ENCODE measurements at regions of chr18 and their contacts with region 1.

Region 1: DNA sequence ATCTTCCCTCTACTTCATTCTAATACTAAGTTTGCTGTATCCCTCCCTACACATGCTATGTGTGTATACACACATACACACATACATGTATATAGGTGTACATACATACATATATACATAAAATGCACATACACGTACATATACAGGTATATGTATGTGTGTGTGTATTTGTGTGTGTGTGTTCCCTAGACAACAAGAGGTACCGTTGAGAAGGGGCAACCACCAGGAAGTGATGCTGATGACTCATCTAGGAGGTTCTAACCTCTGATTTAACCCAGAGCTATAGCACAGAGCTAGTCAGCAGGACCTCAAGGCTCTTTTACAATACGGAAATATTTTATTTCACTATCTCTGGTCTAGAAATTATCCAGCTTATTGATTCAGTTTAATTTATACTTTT is 139.2 kb downstream of the LAMA3 start:
- DNase-seq: peak; percentile 68
- ATAC-seq: no peak
- H3K4me3 ChIP-seq: no peak overlapping the region
- H3K27ac ChIP-seq: no peak overlapping the region
- H3K4me1 ChIP-seq: no peaks in the 10 kb centered on the region
- H3K27me3 ChIP-seq: no peaks in the 10 kb centered on the region
- CTCF ChIP-seq: no peak
- POLR2A ChIP-seq: no peak
- RAD21 ChIP-seq: no peak

Region 2: DNA sequence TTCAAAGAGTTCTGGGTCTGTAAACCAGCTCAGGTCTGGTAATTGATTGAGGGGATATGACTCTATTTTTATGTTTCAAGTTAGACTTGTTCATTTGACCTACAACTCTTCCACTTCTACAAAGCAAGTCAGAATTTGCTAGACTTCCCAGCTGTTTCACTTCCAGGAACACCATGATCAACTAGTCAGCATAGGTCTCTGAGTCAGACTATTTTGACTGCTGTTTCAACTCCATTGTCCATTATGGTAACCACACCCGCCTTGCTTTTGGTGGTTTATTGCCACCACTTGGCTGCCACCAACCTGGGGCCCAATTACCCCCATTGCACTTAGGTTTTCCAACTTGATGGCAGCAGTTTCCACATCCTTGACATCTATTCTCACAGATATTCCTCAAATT is 22.5 kb before region 1 on chr18:
- CTCF ChIA-PET with region 1: no interaction called
- POLR2A ChIA-PET with region 1: no interaction called
- dilution Hi-C with region 1: no loop called
- in situ Hi-C with region 1: no loop called
- intact Hi-C with region 1: no loop called
- DNase-seq: peak; percentile 64
- ATAC-seq: no peak
- H3K4me3 ChIP-seq: no peak overlapping the region
- H3K27ac ChIP-seq: no peak overlapping the region
- H3K4me1 ChIP-seq: no peaks in the 10 kb centered on the region
- H3K27me3 ChIP-seq: peaks cover 38% of the 10 kb centered on the region
- CTCF ChIP-seq: no peak
- POLR2A ChIP-seq: no peak
- RAD21 ChIP-seq: no peak

Region 3: GRCh38 chr18:24126155-24126961 is 297.9 kb after region 1 on chr18:
- CTCF ChIA-PET with region 1: no interaction called
- POLR2A ChIA-PET with region 1: no interaction called
- dilution Hi-C with region 1: no loop called
- in situ Hi-C with region 1: loop called (anchors 10 kb)
- intact Hi-C with region 1: no loop called
- DNase-seq: peak; percentile 36
- ATAC-seq: peak; percentile 43
- H3K4me3 ChIP-seq: no peak overlapping the region
- H3K27ac ChIP-seq: no peak overlapping the region
- H3K4me1 ChIP-seq: peaks cover 6% of the 10 kb centered on the region
- H3K27me3 ChIP-seq: no peaks in the 10 kb centered on the region
- CTCF ChIP-seq: no peak
- POLR2A ChIP-seq: no peak
- RAD21 ChIP-seq: no peak

Measured in IMR-90 (cell line).